ENCODE measurements at regions of chr1 and their contacts with region 1.

Region 1: GRCh38 chr1:29912425-29912824 is 676.1 kb downstream of the PTPRU start:
- DNase-seq: peak; percentile 30
- H3K4me3 ChIP-seq: no peak overlapping the region
- H3K27ac ChIP-seq: no peak overlapping the region
- H3K4me1 ChIP-seq: no peaks in the 10 kb centered on the region
- H3K27me3 ChIP-seq: no peaks in the 10 kb centered on the region
- CTCF ChIP-seq: peak; percentile 41 to 67

Region 2: DNA sequence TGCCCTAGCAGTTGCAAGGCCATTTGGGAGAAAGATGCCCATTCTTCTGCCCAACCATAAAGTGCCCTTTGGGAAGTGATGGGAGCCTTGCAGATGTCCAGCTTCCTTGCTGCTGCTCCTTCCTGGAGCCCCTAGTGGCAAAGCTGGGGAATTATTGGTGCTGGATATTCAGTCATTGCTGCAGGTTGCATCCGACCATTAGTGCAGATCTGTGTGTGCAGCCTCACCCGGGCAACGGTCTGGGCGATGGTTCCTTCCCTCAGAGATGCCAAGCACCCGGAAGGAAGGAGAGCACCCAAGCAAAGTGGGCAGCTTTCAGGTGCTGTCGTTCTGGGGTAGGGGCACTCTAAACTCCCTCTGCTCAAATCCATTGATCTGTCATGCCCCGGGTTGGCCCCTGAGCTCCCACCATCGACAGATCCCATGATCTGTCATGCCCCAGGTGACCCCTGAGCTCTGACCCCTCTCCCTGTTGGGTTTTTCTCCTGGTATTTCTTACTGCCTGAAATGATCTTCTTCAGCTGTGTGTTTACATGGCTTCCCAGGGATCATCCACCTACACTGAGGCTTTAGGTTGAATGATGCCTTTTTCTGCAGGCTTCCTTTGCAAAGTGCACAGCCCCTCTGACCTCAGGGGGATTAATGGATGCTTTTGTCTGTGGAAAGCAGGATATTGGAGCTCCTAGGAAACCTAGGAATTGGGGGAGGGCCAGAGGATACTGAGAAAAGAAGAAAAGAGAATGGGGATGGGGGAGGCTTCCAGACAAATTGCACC is 208.6 kb before region 1 on chr1:
- CTCF ChIA-PET with region 1: no interaction called
- dilution Hi-C with region 1: no loop called
- in situ Hi-C with region 1: no loop called
- intact Hi-C with region 1: loop called (anchors 5 kb)
- DNase-seq: peak; percentile 45
- H3K4me3 ChIP-seq: no peak overlapping the region
- H3K27ac ChIP-seq: no peak overlapping the region
- H3K4me1 ChIP-seq: peaks cover 16% of the 10 kb centered on the region
- H3K27me3 ChIP-seq: no peaks in the 10 kb centered on the region
- CTCF ChIP-seq: peak; percentile 91 to 95

Region 3: GRCh38 chr1:29984538-29985357 is 72.3 kb after region 1 on chr1:
- CTCF ChIA-PET with region 1: no interaction called
- dilution Hi-C with region 1: no loop called
- in situ Hi-C with region 1: no loop called
- intact Hi-C with region 1: no loop called
- DNase-seq: no peak
- H3K4me3 ChIP-seq: no peak overlapping the region
- H3K27ac ChIP-seq: no peak overlapping the region
- H3K4me1 ChIP-seq: no peaks in the 10 kb centered on the region
- H3K27me3 ChIP-seq: no peaks in the 10 kb centered on the region
- CTCF ChIP-seq: no peak

Region 4: GRCh38 chr1:30111431-30111830 is 199.0 kb after region 1 on chr1:
- CTCF ChIA-PET with region 1: no interaction called
- dilution Hi-C with region 1: no loop called
- in situ Hi-C with region 1: no loop called
- intact Hi-C with region 1: loop called (anchors 1 kb)
- DNase-seq: peak; percentile 16
- H3K4me3 ChIP-seq: no peak overlapping the region
- H3K27ac ChIP-seq: no peak overlapping the region
- H3K4me1 ChIP-seq: no peaks in the 10 kb centered on the region
- H3K27me3 ChIP-seq: no peaks in the 10 kb centered on the region
- CTCF ChIP-seq: peak; percentile 43 to 69

Region 5: DNA sequence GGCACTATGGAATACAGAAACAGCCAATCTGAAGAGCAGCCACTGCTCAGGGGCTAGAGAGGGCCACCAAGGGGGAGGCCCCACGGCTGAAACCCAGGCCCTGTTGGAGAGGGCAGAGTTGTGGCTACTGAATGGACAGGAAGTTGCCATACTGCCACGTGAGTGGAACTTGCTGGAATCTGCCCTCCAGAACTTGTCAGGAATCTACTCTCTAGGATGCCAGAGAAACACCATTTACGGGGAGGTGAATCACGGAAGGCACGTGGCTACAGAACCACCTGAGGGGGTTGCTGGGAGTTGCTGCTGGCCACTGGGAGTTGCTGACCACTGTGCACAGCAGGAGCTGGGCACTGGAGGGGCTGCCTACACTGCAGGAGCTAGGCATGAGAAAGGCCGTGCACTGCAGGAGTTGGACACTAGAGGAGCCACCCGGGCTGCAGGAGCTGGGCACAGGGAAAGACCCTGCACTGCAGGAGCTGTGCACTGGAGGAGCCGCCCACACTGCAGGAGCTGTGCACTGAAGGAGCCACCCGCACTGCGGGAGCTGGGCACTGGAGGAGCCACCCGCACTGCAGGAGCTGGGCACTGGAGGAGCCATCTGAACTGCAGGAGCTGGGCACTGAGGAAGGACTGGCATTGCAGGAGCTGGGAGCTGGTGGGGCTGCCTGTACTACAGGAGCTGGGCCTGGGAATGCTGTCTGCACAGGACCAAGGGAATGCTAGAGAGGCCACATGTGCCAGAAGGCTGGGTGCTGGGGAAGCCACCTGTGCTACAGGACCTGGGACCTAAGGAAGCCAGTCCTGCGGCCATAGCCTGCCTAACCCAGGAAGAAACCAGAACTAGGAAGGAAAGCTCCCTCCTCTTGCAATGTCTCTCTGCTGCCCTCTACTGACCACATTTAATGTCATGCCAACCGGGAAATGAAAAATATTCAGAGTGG is 467.5 kb after region 1 on chr1:
- CTCF ChIA-PET with region 1: no interaction called
- dilution Hi-C with region 1: no loop called
- in situ Hi-C with region 1: no loop called
- intact Hi-C with region 1: loop called (anchors 1 kb)
- DNase-seq: peak; percentile 68
- H3K4me3 ChIP-seq: no peak overlapping the region
- H3K27ac ChIP-seq: no peak overlapping the region
- H3K4me1 ChIP-seq: peaks cover 23% of the 10 kb centered on the region
- H3K27me3 ChIP-seq: no peaks in the 10 kb centered on the region
- CTCF ChIP-seq: peak; percentile 89 to 93